H1 (cell line): ENCODE measurements at regions of chr17 and their contacts with region 1.

Region 1: DNA sequence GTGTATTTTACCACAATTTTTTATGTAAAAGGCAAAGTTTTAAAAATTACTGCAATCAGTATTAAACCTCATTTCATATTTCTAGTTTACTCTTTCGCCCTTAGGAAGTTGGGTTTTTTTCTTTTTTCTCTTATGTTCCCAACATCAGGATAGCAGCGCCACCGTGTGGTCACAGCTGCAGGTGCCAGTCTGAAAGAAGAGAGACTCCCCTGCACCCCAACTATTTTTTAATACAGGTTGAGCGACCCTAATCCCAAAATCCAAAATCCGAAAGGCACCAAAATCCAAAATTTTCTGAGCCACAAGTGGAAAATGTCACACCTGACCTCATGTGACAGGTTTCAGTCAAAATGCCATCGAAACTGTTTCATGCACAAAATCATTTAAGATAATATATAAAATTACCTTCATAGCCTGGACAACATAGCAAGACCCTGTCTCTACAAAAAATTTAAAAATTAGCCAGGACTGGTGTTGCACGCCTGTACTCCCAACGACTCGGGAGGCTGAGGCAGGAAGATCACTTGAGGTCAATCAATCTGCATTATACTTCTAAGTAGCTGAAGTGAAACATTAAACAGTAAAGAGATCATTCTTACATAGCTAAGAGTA is 21.8 kb upstream of the ASGR2 start:
- DNase-seq: peak in 1 of 2 experiments; percentile 84
- H3K4me3 ChIP-seq: no peak overlapping the region
- H3K27ac ChIP-seq: no peak overlapping the region
- H3K4me1 ChIP-seq: peaks cover 0 to 29% (median 17%) of the 10 kb centered on the region in 4 experiments; a peak in 6 of 7 replicates
- H3K27me3 ChIP-seq: no peaks in the 10 kb centered on the region; a peak in 1 of 7 replicates
- CTCF ChIP-seq: peak; percentile 70 to 81 (median 77)
- EP300 ChIP-seq: no peak
- POLR2A ChIP-seq: no peak
- RAD21 ChIP-seq: peak; percentile 90 to 92

Region 2: DNA sequence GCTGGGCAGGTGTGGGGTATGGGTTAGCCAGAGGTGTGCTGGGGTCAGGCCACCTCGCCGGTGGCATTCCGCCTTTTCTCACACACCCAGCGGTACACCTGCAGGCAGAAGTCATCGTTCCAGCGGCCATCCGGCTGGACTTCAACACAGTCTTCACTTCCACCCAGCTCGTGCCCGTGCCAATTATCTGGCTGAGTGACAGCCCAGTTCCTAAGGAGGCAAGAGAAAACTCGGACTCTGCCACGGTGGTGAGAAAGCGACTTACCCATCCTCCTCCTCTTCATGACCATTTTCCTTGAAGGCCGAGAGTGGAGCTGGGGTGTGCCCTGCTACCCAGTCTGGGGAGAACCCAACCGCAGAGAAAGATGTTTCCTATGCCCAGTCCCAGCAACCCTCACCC is 34.8 kb before region 1 on chr17:
- CTCF ChIA-PET with region 1: interaction called, 10 read pairs
- POLR2A ChIA-PET with region 1: interaction called, 4 read pairs
- DNase-seq: no peak
- H3K4me3 ChIP-seq: no peak overlapping the region
- H3K27ac ChIP-seq: no peak overlapping the region
- H3K4me1 ChIP-seq: no peaks in the 10 kb centered on the region
- H3K27me3 ChIP-seq: no peaks in the 10 kb centered on the region; a peak in 1 of 7 replicates
- CTCF ChIP-seq: no peak
- EP300 ChIP-seq: no peak
- POLR2A ChIP-seq: no peak
- RAD21 ChIP-seq: no peak

Region 3: DNA sequence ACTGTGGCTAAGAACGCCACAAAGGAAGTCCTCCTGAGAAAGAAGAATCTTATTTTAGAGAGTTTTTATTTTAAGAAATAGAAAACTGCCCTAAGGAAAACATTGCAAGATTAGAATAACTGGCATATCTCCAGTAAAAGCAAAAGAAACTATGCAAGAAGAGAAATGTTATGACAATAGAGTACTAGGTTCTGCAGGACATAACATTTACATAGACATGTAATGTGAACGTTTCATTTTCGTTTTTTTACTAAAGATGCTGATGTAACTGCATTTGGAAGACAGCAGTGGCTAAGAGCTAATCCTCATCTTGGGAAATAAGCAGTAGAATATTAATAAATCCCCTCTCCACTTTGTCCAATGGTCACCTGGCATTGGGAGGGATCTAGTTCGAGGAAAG is 14.0 kb before region 1 on chr17:
- CTCF ChIA-PET with region 1: interaction called, 48 read pairs
- POLR2A ChIA-PET with region 1: interaction called, 4 read pairs
- DNase-seq: no peak
- H3K4me3 ChIP-seq: no peak overlapping the region
- H3K27ac ChIP-seq: no peak overlapping the region
- H3K4me1 ChIP-seq: no peaks in the 10 kb centered on the region
- H3K27me3 ChIP-seq: no peaks in the 10 kb centered on the region
- CTCF ChIP-seq: no peak
- EP300 ChIP-seq: no peak
- POLR2A ChIP-seq: no peak
- RAD21 ChIP-seq: no peak

Region 4: GRCh38 chr17:7167832-7168231 is 31.5 kb after region 1 on chr17:
- CTCF ChIA-PET with region 1: interaction called, 33 read pairs
- POLR2A ChIA-PET with region 1: interaction called, 3 read pairs
- DNase-seq: no peak
- H3K4me3 ChIP-seq: no peak overlapping the region
- H3K27ac ChIP-seq: no peak overlapping the region
- H3K4me1 ChIP-seq: peaks cover 0 to 4% (median under 1%) of the 10 kb centered on the region in 4 experiments; a peak in 1 of 7 replicates
- H3K27me3 ChIP-seq: no peaks in the 10 kb centered on the region
- CTCF ChIP-seq: no peak
- EP300 ChIP-seq: no peak
- POLR2A ChIP-seq: no peak
- RAD21 ChIP-seq: no peak

Region 5: GRCh38 chr17:7192271-7193100 is 56.1 kb after region 1 on chr17:
- CTCF ChIA-PET with region 1: no interaction called
- POLR2A ChIA-PET with region 1: no interaction called
- DNase-seq: no peak
- H3K4me3 ChIP-seq: no peak overlapping the region
- H3K27ac ChIP-seq: no peak overlapping the region
- H3K4me1 ChIP-seq: no peaks in the 10 kb centered on the region
- H3K27me3 ChIP-seq: no peaks in the 10 kb centered on the region
- CTCF ChIP-seq: no peak
- EP300 ChIP-seq: no peak
- POLR2A ChIP-seq: no peak
- RAD21 ChIP-seq: no peak

Region 6: DNA sequence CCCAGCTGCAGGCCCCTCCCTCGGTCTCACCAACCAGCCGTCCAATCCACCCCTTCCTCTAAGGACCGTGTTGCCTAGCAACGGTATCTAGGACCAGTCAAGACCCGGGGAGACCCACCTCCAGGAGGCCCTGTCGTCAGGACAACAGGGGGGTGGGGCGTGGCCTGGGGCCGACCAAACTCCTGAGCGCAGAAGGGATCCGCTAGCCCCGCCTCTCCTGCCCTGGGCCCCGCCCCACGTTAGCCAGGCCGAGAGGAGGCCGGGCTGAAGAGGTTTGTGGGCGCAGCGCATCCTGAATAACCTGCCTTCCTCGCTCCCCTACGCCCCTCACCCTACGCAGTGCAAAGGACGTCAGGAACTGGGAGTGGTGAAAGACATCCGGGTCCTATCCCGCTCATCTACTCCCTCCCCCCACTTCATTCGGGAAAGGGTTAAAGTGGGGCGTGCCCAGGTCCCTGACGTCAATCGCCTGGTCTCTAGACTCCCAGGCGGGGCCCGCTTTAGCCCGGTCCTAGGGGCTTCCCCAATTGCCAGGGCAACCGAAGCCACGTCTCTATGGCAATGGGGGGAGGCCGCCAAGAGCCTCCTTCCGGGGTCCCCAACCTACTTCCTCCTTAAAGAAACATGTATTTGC is 68.6 kb after region 1 on chr17:
- CTCF ChIA-PET with region 1: no interaction called
- POLR2A ChIA-PET with region 1: no interaction called
- DNase-seq: peak; percentile 89 to 97
- H3K4me3 ChIP-seq: peak overlapping the region; percentile 40 to 69 (median 59)
- H3K27ac ChIP-seq: peak overlapping the region; percentile 68
- H3K4me1 ChIP-seq: peaks cover 5 to 28% (median 23%) of the 10 kb centered on the region in 4 experiments
- H3K27me3 ChIP-seq: no peaks in the 10 kb centered on the region; a peak in 1 of 7 replicates
- CTCF ChIP-seq: no peak
- EP300 ChIP-seq: no peak
- POLR2A ChIP-seq: no peak
- RAD21 ChIP-seq: no peak

Region 7: GRCh38 chr17:7239091-7240027 is 103.0 kb after region 1 on chr17 and contains the start of gene PHF23:
- CTCF ChIA-PET with region 1: no interaction called
- POLR2A ChIA-PET with region 1: no interaction called
- DNase-seq: peak; percentile 94 to 99
- H3K4me3 ChIP-seq: peak within 1 kb of the TSS; percentile 91 to 97 (median 94)
- H3K27ac ChIP-seq: peak within 1 kb of the TSS; percentile 63
- H3K4me1 ChIP-seq: peaks cover 5 to 24% (median 12%) of the 10 kb centered on the region in 4 experiments
- H3K27me3 ChIP-seq: no peaks in the 10 kb centered on the region
- CTCF ChIP-seq: no peak
- EP300 ChIP-seq: no peak
- POLR2A ChIP-seq: peak; percentile 27 to 36; a peak in 1 of 3 replicates
- RAD21 ChIP-seq: no peak
- total RNA-seq, gene PHF23: 62.8 and 65.1 TPM in 2 replicates